Activated CD4-positive, alpha-beta T cell treated with anti-CD3 and anti-CD28 coated beads, Interleukin-2, amount 10 ng/mL, durations not matched to agents 7 days and 5 days (primary cell): ENCODE measurements at regions of chr2 and their contacts with region 1.

Region 1: DNA sequence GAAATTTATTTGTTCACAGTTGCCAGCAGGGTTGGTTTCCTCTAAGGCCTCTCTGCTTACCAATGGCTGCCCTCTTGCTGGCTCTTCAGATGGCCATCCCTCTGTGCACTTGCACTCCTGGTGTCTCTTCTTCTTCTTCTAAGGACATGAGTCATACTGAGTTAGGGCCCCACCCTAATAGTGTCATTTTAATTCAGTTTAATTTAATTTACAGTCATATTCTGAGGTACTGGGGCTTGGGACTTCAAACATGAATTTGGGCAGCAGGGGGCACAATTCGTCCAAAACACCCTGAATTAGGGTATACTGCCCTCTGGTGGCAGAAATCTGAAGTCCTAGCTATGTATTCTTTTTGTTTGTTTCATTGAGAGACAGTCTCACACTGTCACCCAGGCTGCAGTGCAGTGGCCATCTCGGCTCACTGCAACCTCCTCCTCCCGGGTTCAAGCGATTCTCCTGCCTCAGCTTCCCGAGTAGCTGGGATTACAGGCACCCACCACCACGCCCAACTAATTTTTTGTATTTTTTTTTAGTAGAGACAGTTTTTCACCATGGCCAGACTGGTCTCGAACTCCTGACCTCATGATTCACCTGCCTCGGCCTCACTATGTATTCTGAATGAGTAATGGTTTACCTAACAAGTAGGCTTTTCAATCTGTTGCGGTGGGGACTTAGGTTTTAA is 19.8 kb downstream of the SLC4A1AP start:
- DNase-seq: peak; percentile 96
- H3K4me3 Mint-ChIP-seq: no peak overlapping the region
- H3K27ac Mint-ChIP-seq: peak overlapping the region; percentile 82
- H3K4me1 Mint-ChIP-seq: peaks cover 26% of the 10 kb centered on the region
- H3K27me3 Mint-ChIP-seq: no peaks in the 10 kb centered on the region

Region 2: DNA sequence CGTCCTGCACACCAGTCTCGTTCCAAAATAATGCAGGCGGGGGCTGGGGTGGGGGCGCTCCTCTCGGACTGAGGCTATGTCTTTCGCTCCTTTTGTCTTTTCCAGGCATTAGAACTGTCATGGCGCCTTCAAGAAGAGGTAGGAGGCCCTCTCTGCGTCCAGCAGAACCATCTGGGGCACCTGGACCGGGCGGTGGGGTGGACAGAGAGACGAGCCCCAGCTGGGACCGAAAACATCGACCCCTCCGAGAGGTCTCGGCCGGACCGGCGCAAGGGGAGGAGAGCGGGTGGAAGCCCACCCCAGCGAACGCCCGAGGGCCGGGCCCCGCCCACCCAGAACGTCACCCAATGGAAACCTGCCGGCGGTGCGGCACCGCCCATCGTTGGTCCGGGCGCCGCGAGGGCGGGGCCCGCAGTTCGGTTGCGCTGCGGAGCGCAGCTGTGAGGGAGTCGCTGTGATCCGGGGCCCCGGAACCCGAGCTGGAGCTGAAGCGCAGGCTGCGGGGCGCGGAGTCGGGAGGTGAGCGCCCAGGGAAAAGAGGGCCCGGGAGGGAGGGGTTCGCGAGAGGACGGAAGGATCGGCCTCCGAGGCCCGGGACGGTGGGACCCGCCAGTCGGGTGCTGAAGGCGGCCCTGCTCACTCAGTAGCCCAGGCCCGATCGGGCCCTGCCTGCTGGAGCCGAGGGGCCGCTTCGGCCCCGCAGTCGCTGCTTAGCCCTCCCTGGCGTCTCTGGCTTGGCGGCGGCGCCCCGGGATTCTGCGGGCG is 255.1 kb before region 1 on chr2 and contains the start of gene NRBP1:
- CTCF ChIA-PET with region 1: interaction called, 12 read pairs
- POLR2A ChIA-PET with region 1: no interaction called
- DNase-seq: peak; percentile 94
- H3K4me3 Mint-ChIP-seq: peak within 1 kb of the TSS; percentile 99
- H3K27ac Mint-ChIP-seq: peak within 1 kb of the TSS; percentile 99
- H3K4me1 Mint-ChIP-seq: peaks cover 37% of the 10 kb centered on the region
- H3K27me3 Mint-ChIP-seq: peaks cover 3% of the 10 kb centered on the region
- total RNA-seq, gene NRBP1: 77.1 to 82.3 TPM

Region 3: GRCh38 chr2:27647289-27647688 is 36.2 kb before region 1 on chr2:
- CTCF ChIA-PET with region 1: interaction called, 19 read pairs
- POLR2A ChIA-PET with region 1: no interaction called
- DNase-seq: no peak
- H3K4me3 Mint-ChIP-seq: no peak overlapping the region
- H3K27ac Mint-ChIP-seq: no peak overlapping the region
- H3K4me1 Mint-ChIP-seq: no peaks in the 10 kb centered on the region
- H3K27me3 Mint-ChIP-seq: no peaks in the 10 kb centered on the region

Region 4: GRCh38 chr2:27697660-27698059 is 14.1 kb after region 1 on chr2:
- CTCF ChIA-PET with region 1: interaction called, 21 read pairs
- POLR2A ChIA-PET with region 1: no interaction called
- DNase-seq: no peak
- H3K4me3 Mint-ChIP-seq: no peak overlapping the region
- H3K27ac Mint-ChIP-seq: no peak overlapping the region
- H3K4me1 Mint-ChIP-seq: peaks cover 12% of the 10 kb centered on the region
- H3K27me3 Mint-ChIP-seq: no peaks in the 10 kb centered on the region

Region 5: DNA sequence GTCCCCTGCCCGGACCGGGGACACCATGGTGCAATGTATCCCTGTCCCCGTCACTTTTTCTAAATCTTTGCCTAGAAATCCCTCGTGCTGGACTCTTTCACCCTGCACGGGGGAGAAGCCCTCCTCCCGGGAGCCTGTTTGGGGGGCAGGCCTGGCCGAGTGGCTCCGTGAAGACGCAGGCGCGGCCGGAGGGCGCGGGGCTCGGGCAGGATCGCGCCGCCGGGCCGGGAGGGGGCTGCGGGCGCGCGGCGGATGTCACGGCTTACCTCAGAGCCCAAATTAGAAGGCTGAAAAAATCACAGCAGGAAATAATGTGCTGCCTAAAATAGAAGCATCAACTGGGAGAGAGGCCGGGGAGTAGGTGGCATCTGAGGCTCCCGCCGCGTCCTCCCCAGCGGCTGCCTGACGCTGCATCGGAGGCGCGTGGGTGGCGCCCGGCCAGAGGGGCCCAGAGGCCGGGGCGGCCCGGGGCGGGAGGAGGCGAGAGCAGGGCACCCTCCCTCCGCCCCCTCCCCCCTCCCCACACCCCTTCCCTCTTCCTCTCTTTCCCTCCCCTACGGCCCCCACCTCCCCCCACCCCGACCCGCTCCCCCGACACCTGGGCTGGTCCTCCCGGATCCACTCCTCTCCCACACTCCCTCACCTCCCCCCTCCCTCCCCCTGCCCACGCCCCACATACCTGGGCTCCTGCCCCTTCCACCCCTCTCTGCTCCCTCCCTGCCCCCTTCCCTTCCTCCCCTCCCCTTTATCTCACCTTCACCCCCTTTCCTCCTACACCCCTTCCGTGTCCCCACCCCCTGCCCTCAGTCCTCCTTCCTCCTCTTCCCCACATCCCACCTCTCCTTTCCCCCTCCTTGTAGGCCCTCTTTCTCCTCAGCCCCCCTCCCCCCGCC is 32.0 kb after region 1 on chr2:
- CTCF ChIA-PET with region 1: interaction called, 10 read pairs
- POLR2A ChIA-PET with region 1: no interaction called
- DNase-seq: peak; percentile 34
- H3K4me3 Mint-ChIP-seq: no peak overlapping the region
- H3K27ac Mint-ChIP-seq: no peak overlapping the region
- H3K4me1 Mint-ChIP-seq: peaks cover 26% of the 10 kb centered on the region
- H3K27me3 Mint-ChIP-seq: peaks cover 17% of the 10 kb centered on the region